AG04449 (cell line): ENCODE measurements at regions of chr10 and their contacts with region 1.

Region 1: DNA sequence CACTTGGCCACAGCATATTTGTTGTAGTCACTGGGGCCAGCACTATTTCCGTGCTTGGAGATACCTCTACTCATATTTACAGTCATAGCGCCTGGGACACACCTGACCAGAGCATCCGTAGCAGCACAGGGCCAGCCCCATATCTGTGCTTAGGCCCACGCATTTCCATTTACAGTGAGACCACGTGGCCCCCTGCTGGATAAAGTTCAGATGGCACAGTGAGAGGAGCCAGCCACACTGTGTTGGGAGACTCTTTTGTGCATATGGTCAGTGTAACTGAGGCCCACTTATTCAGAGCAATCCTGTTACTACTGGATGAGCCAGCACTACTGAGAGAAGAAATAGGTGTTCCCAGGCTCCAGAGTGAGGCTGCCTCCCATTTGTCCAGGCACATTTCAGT is 455.3 kb downstream of the REEP3 start:
- DNase-seq: no peak
- H3K4me3 ChIP-seq: no peak overlapping the region
- CTCF ChIP-seq: peak; percentile 67

Region 2: DNA sequence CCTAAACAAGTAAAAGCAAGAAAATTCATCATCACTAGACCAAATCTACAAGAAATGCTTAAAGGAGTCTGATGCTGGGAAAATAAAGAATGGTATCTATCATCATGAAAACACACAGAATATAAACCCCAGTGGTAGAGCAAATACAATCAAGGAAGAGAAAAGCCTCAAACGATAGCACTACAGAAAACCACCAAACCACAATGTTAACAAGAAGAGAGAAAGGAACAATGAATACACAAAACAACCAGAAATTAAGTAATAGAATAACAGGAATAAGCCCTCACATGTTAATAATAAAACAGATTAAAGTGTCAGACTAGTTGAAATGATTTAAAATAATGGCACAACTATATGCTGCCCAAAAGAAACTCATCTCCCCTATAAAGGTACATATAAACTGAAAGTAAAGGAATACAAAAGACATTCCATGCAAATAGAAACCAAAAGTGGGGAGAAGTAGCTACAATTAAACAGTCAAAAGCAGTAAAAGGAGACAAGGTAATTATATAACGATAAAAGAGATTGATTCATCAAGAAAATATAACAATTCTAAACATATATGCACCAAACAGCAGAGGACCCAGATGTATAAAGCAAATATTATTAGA is 588.0 kb before region 1 on chr10:
- CTCF ChIA-PET with region 1: no interaction called
- POLR2A ChIA-PET with region 1: no interaction called
- DNase-seq: no peak
- H3K4me3 ChIP-seq: no peak overlapping the region
- CTCF ChIP-seq: no peak

Region 3: DNA sequence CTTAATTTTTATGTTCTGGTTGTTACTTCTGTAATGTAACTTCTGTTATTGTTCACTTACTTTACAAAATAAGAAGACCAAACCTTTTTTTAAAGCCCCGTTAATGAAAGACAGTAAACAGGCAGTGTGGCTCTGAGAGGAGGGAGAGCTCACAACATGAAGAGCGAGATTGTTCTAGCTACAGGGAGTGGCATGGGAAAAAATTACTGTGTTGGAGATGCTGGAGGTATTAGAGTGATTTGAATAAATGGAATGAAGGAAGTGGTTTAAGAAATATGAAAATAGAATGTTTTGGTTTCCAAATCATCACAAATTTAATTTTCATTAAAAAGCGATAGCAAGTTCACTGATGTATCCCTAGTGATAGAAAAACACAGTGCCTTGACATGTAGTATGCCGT is 423.5 kb before region 1 on chr10:
- CTCF ChIA-PET with region 1: no interaction called
- POLR2A ChIA-PET with region 1: no interaction called
- DNase-seq: peak; percentile 72
- H3K4me3 ChIP-seq: no peak overlapping the region
- CTCF ChIP-seq: no peak

Region 4: GRCh38 chr10:63681993-63682697 is 294.4 kb before region 1 on chr10:
- CTCF ChIA-PET with region 1: no interaction called
- POLR2A ChIA-PET with region 1: no interaction called
- DNase-seq: peak; percentile 97
- H3K4me3 ChIP-seq: no peak overlapping the region
- CTCF ChIP-seq: no peak

Region 5: GRCh38 chr10:63935705-63936104 is 40.8 kb before region 1 on chr10:
- CTCF ChIA-PET with region 1: interaction called, 10 read pairs
- POLR2A ChIA-PET with region 1: no interaction called
- DNase-seq: no peak
- H3K4me3 ChIP-seq: no peak overlapping the region
- CTCF ChIP-seq: no peak

Region 6: DNA sequence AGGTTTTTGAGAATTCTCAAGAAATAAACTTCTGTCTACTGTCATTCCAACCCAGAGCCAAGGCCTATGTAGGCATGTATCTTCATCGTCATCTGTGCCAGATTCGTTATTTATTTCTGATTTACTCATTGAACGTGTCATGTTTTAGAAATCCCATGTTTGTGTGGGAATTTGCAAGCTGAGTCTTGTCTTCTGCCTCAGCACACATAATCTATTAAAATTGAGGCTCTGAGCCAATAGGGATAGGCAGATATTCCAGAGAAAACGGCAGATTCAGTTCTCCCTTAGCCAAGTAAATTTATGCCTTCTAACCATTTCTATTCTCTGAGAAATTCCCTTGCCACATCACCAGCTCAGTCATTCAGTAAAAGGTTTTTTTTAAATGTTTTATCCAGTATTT is 10.7 kb before region 1 on chr10:
- CTCF ChIA-PET with region 1: interaction called, 16 read pairs
- POLR2A ChIA-PET with region 1: no interaction called
- DNase-seq: no peak
- H3K4me3 ChIP-seq: no peak overlapping the region
- CTCF ChIP-seq: no peak

Region 7: GRCh38 chr10:63987212-63987611 is 10.7 kb after region 1 on chr10:
- CTCF ChIA-PET with region 1: interaction called, 12 read pairs
- POLR2A ChIA-PET with region 1: no interaction called
- DNase-seq: no peak
- H3K4me3 ChIP-seq: no peak overlapping the region
- CTCF ChIP-seq: no peak